ENCODE measurements at regions of chr2 and their contacts with region 1.

Region 1: GRCh38 chr2:77977471-77978063 is 455.4 kb upstream of the LRRTM4 start:
- DNase-seq: no peak
- ATAC-seq: peak; percentile 34
- H3K4me3 ChIP-seq: no peak overlapping the region
- H3K27ac ChIP-seq: no peak overlapping the region
- H3K4me1 ChIP-seq: no peaks in the 10 kb centered on the region
- H3K27me3 ChIP-seq: no peaks in the 10 kb centered on the region
- CTCF ChIP-seq: no peak; a peak in 1 of 6 replicates
- EP300 ChIP-seq: no peak
- POLR2A ChIP-seq: no peak
- RAD21 ChIP-seq: no peak

Region 2: DNA sequence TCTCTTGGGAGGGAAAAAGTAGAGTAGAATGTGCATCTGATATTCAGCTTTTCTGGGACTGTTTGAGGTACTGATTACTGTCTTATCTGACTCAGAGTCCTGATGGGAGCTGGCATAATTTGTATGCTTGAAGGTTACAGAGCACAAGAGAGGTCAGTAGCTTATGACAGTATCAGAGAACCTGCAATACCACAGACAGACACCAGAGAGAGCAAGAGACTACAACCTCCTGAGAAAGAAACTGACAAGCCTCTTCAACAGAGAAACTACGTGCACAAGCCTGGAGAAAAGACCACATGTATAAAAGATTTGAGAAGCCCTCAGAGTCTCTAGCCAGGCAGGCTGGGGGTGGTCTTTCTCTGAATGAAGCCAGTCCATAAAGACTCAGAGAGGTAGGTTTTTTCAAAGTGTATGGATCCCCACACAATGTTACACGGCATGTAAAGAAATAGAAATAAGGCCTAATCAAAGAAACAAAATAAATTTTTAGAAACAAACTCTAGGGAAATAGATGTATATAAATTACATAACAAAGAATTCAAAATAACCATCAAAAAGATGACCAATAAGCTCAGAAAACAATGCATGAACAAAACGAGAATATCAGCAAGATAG is 1023.7 kb before region 1 on chr2:
- CTCF ChIA-PET with region 1: no interaction called
- POLR2A ChIA-PET with region 1: no interaction called
- RAD21 ChIA-PET with region 1: no interaction called
- SMC1A ChIA-PET with region 1: no interaction called
- in situ Hi-C with region 1: no loop called
- intact Hi-C with region 1: loop called (anchors 10 kb)
- DNase-seq: peak; percentile 17
- ATAC-seq: peak; percentile 92
- H3K4me3 ChIP-seq: no peak overlapping the region
- H3K27ac ChIP-seq: no peak overlapping the region
- H3K4me1 ChIP-seq: no peaks in the 10 kb centered on the region
- H3K27me3 ChIP-seq: no peaks in the 10 kb centered on the region
- CTCF ChIP-seq: peak; percentile 63 to 77 (median 73)
- EP300 ChIP-seq: no peak
- POLR2A ChIP-seq: no peak
- RAD21 ChIP-seq: peak; percentile 76